Left cardiac atrium (tissue), 4 donors: ENCODE measurements at regions of chr11 and their contacts with region 1.

Region 1: GRCh38 chr11:7986768-7987559 is at the start of gene EIF3F:
- DNase-seq: peak; percentile 89
- ATAC-seq: peak; percentile 99 to 100
- total RNA-seq, gene EIF3F: 141 to 142 TPM

Region 2: GRCh38 chr11:7098235-7098832 is 888.6 kb before region 1 on chr11:
- intact Hi-C with region 1: loop called in 1 of 2 experiments (anchors 5 kb)
- DNase-seq: no peak
- ATAC-seq: peak; percentile 41 to 52

Region 3: DNA sequence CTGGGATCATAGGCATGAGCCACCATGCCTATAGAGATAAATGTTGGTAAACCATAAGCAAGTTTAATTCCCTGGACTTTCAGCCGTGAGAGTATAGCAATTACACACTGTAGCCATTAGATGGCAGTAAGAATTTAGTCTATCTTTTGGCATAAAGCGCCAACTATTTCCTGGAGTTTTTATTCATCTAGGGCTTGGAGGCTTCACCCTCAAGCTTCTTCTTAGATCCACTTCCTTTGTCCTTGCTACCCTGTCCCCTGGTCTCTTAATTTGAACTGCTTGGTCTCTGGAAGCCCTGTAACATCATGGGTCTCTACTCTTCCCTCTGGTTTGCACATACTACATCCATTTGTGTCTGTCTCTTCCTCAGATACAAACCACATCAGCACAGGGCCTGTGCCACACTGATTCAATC is 94.1 kb before region 1 on chr11:
- intact Hi-C with region 1: loop called (anchors 2 to 10 kb)
- DNase-seq: no peak
- ATAC-seq: peak; percentile 65 to 73